H1 (cell line): ENCODE measurements at regions of chr1 and their contacts with region 1.

Region 1: DNA sequence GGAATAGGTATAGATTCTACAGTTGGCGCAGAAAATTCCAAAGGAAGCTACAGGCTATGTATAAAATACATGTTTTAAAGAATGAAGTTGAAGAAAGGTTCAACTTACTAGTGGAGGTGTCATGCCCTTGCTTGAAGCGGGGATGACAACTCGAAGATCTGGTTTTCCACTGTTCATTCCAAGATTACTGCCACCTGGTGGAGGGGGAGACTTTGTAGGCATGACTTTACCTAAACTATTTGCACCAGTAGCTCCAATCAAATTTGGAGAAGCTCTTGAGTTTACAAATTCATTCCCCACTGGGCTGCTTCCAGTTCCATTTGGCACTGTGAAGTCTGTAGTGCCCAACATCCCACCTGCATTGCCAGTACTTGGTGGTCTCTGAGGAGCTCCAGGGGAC is 81.7 kb downstream of the AXDND1 start:
- DNase-seq: peak in 1 of 2 experiments; percentile 55
- H3K4me3 ChIP-seq: no peak overlapping the region
- H3K27ac ChIP-seq: no peak overlapping the region
- H3K4me1 ChIP-seq: no peaks in the 10 kb centered on the region
- H3K27me3 ChIP-seq: no peaks in the 10 kb centered on the region
- CTCF ChIP-seq: peak; percentile 14 to 51 (median 48)
- EP300 ChIP-seq: no peak
- POLR2A ChIP-seq: no peak
- RAD21 ChIP-seq: peak; percentile 41 to 56

Region 2: DNA sequence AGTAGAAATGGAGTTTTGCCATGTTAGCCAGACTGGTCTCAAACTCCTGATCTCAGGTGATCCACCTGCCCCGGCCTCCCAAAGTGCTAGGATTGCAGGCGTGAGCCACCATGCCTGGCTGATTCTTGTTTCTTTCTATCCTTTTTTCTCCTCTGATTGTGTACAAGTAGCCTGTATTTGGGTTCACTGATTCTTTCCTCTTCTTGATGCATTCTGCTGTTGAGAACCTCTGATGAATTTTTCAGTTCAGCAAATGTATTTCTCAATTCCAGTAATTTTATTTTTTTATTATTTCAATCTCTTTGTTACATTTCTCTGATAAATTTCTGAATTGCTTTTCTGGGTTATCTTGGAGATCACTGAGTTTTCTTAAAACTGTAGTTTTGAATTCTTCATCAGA is 22.9 kb before region 1 on chr1:
- CTCF ChIA-PET with region 1: interaction called, 10 read pairs
- POLR2A ChIA-PET with region 1: no interaction called
- DNase-seq: no peak
- H3K4me3 ChIP-seq: no peak overlapping the region
- H3K27ac ChIP-seq: no peak overlapping the region
- H3K4me1 ChIP-seq: no peaks in the 10 kb centered on the region
- H3K27me3 ChIP-seq: no peaks in the 10 kb centered on the region
- CTCF ChIP-seq: no peak
- EP300 ChIP-seq: no peak
- POLR2A ChIP-seq: no peak
- RAD21 ChIP-seq: no peak

Region 3: DNA sequence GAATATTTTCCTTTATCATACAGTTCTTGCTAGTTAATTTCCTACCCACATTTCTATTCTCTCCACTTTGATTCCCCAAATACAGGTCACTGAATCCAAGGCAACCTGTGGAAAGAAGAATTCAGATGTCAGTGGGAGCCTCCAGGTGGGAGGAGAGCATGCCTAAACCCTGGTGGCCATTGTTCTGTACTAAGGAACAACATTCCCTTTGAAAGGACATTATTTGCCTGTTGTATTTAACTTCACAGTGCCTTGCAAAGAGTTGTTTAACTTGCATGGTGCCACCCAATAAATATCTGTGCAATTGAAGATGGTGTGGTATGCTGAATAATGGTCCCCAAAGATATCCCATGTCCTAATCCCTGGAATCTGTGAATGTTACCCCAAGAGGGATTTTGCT is 106.9 kb after region 1 on chr1:
- CTCF ChIA-PET with region 1: no interaction called
- POLR2A ChIA-PET with region 1: no interaction called
- DNase-seq: no peak
- H3K4me3 ChIP-seq: no peak overlapping the region
- H3K27ac ChIP-seq: no peak overlapping the region
- H3K4me1 ChIP-seq: no peaks in the 10 kb centered on the region
- H3K27me3 ChIP-seq: no peaks in the 10 kb centered on the region; a peak in 1 of 7 replicates
- CTCF ChIP-seq: no peak
- EP300 ChIP-seq: no peak
- POLR2A ChIP-seq: no peak
- RAD21 ChIP-seq: no peak